ENCODE measurements at regions of chr1 and their contacts with region 1.

Region 1: DNA sequence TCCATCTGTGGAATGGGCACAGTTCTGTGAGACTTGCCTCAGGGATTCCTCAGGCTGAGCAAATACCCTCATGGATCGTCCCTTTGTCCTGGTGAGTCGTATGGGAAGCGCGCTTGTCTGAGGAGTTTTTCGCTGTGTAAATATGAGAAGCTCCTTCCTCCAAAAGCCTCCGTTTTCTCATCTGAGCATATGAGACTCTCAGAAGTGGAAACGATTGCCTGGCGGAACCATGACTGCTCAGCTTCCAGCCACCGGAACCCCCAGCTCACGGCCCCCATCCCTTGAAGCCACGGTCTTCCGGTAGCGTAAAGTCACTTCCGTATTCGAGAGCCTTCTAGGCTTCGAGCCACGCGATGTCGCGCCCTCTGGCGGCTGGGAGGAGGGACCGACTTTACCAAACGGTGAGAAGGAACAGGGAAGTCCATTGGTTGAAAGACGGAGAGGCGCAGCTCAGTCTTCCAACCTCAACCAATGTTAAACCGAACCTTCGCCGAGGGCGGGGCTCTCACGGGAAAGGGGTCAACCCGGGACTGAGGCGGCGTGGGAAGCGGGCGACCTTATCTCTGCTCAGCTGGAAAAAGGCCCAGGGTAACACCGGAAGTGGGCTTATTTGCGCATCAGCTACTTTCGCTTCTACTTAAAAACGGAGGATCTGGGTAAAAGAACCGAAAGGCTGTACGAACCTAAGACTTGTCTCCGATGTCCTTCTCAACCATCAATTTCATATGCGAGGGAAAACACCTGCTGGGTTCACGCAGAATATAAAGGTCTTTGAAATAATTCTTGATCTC is 46.2 kb downstream of the AZIN2 start:
- DNase-seq: peak; percentile 100
- ATAC-seq: peak; percentile 95
- H3K4me3 Mint-ChIP-seq: peak overlapping the region; percentile 97
- H3K27ac Mint-ChIP-seq: peak overlapping the region; percentile 98
- H3K4me1 Mint-ChIP-seq: peaks cover 51% of the 10 kb centered on the region
- H3K27me3 Mint-ChIP-seq: no peaks in the 10 kb centered on the region

Region 2: GRCh38 chr1:33086384-33086850 is 40.8 kb before region 1 on chr1:
- CTCF ChIA-PET with region 1: interaction called, 127 read pairs
- DNase-seq: peak; percentile 65
- ATAC-seq: no peak
- H3K4me3 Mint-ChIP-seq: no peak overlapping the region
- H3K27ac Mint-ChIP-seq: no peak overlapping the region
- H3K4me1 Mint-ChIP-seq: peaks cover 47% of the 10 kb centered on the region
- H3K27me3 Mint-ChIP-seq: peaks cover 9% of the 10 kb centered on the region

Region 3: DNA sequence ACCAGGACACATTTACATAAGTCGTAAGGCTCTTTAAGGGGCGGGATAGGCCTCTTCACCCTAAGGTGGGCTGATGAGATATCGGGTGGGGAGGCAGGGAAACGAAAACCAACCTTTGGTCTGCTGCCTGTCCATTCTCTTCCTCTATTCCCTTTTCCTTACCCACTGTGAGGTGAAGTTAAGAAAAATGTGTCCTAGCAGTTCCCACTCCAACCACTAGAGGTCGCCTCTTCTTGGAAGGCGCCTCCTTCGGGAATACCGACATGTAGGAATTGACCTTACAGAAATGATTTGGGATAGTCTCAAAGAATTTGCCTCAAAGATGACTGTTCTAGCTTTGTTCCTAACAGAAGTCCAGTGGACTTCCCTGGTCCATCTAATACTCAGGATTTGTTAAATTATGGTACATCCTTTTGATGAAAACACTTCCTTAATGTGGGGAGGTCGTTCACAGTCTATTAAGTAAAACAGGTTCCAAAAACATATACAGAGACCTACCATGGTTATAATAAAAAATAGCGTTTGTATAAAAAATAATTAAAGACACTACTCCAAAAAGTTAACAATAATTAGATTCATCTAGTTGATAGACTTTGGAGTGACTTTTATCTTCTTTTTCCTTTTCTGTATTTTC is 32.1 kb before region 1 on chr1:
- CTCF ChIA-PET with region 1: interaction called, 127 read pairs
- DNase-seq: peak; percentile 44
- ATAC-seq: no peak
- H3K4me3 Mint-ChIP-seq: no peak overlapping the region
- H3K27ac Mint-ChIP-seq: no peak overlapping the region
- H3K4me1 Mint-ChIP-seq: peaks cover 78% of the 10 kb centered on the region
- H3K27me3 Mint-ChIP-seq: no peaks in the 10 kb centered on the region

Region 4: GRCh38 chr1:33111970-33112369 is 15.2 kb before region 1 on chr1:
- CTCF ChIA-PET with region 1: interaction called, 38 read pairs
- DNase-seq: peak; percentile 35
- ATAC-seq: peak; percentile 55
- H3K4me3 Mint-ChIP-seq: no peak overlapping the region
- H3K27ac Mint-ChIP-seq: no peak overlapping the region
- H3K4me1 Mint-ChIP-seq: peaks cover 7% of the 10 kb centered on the region
- H3K27me3 Mint-ChIP-seq: no peaks in the 10 kb centered on the region

Region 5: GRCh38 chr1:33137800-33138199 is 10.6 kb after region 1 on chr1:
- CTCF ChIA-PET with region 1: interaction called, 16 read pairs
- DNase-seq: peak; percentile 59
- ATAC-seq: peak; percentile 61
- H3K4me3 Mint-ChIP-seq: no peak overlapping the region
- H3K27ac Mint-ChIP-seq: no peak overlapping the region
- H3K4me1 Mint-ChIP-seq: peaks cover 13% of the 10 kb centered on the region
- H3K27me3 Mint-ChIP-seq: no peaks in the 10 kb centered on the region

Region 6: GRCh38 chr1:33181921-33182341 is 54.7 kb after region 1 on chr1 and contains the start of gene TRIM62:
- CTCF ChIA-PET with region 1: interaction called, 22 read pairs
- DNase-seq: peak; percentile 80
- ATAC-seq: peak; percentile 72
- H3K4me3 Mint-ChIP-seq: peak within 1 kb of the TSS; percentile 81
- H3K27ac Mint-ChIP-seq: peak within 1 kb of the TSS; percentile 82
- H3K4me1 Mint-ChIP-seq: peaks cover 22% of the 10 kb centered on the region
- H3K27me3 Mint-ChIP-seq: peaks cover 28% of the 10 kb centered on the region
- total RNA-seq, gene TRIM62: 9.9 to 13.0 TPM

Region 7: GRCh38 chr1:33472349-33472980 is 345.3 kb after region 1 on chr1 and contains the start of gene ZSCAN20:
- CTCF ChIA-PET with region 1: interaction called, 11 read pairs
- DNase-seq: peak; percentile 93
- ATAC-seq: peak; percentile 98
- H3K4me3 Mint-ChIP-seq: peak within 1 kb of the TSS; percentile 75
- H3K27ac Mint-ChIP-seq: peak within 1 kb of the TSS; percentile 72
- H3K4me1 Mint-ChIP-seq: peaks cover 33% of the 10 kb centered on the region
- H3K27me3 Mint-ChIP-seq: no peaks in the 10 kb centered on the region
- total RNA-seq, gene ZSCAN20: 3.3 to 4.0 TPM